GM23248 (cell line): ENCODE measurements at regions of chr6 and their contacts with region 1.

Region 1: DNA sequence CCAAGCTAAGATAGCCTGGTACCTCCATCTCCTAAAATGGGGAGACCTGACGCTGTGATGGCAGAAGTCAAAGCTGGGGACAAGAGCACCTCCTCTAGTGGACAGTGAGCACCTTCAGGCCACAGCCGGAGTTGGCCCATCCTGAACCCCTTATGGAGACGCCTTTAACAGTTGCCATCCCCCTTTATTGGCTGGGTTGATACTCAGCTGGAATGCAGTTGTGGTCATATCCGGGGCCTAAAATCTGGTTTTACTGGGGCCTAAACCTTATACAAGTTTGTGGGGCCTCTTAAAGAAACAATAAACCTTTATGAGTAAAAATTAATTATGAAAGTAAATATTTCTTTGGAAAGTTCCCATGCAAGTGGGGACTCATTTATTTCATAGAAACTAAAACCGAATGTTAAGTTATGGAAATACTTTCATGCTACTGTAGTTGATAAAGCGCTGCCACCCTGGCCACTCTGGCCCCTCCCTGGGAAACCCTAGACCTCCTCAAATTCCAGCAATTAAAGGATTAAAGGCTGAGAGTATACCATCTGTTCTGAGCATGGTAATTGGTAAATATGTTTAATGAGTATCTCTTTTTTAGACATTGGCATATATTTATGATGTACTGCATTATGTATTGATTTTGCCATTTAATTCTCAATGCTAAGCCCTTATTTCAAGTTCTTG is 95.1 kb upstream of the SASH1 start:
- DNase-seq: no peak
- H3K4me3 ChIP-seq: no peak overlapping the region
- H3K27ac ChIP-seq: no peak overlapping the region
- H3K4me1 ChIP-seq: peaks cover 14% of the 10 kb centered on the region
- H3K27me3 ChIP-seq: no peaks in the 10 kb centered on the region

Region 2: DNA sequence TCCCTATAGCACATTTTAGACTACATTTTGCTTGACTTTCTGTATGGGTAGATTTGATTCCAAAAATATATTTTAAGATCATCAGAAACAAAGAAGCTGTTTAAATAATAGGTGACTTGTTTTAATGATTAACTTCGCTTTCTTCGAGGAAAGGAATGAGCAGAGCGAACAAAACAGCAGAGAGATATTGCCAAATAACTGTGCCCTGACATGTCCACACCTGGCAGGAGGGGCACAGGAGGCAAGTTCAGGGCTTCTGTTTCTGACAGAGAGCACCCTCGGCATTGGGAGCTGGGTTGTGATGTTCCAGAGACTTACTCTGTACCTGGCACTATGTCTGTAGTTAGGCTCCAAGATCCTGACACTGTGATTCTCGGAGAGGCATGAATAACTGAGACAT is 60.6 kb before region 1 on chr6:
- in situ Hi-C with region 1: loop called (anchors 5 kb)
- DNase-seq: no peak
- H3K4me3 ChIP-seq: no peak overlapping the region
- H3K27ac ChIP-seq: no peak overlapping the region
- H3K4me1 ChIP-seq: peaks cover 12% of the 10 kb centered on the region
- H3K27me3 ChIP-seq: no peaks in the 10 kb centered on the region